ENCODE measurements at regions of chr3 and their contacts with region 1.

Region 1: GRCh38 chr3:11379233-11379823 is 107.1 kb downstream of the ATG7 start:
- DNase-seq: peak; percentile 73

Region 2: DNA sequence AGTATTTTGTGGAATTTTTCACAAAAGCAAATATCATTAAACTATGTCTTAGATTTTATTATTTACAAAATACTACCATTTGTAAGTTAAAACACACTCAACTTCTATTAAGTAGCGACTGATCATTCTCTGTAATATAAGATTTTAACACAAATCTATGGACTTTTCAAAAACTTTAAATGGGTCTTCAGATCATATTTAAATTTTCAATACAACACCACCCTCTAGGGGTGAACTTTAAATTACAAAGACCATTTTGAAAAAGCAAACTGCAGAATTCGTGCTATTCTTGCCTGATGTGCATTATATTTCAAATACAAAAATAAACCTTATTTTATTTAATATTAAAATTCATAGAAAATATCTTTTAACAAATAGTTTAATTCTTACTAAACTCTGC is 272.6 kb after region 1 on chr3:
- in situ Hi-C with region 1: loop called (anchors 25 kb)
- DNase-seq: peak; percentile 59

Region 3: GRCh38 chr3:11803977-11804892 is 424.9 kb after region 1 on chr3:
- in situ Hi-C with region 1: loop called (anchors 25 kb)
- DNase-seq: peak; percentile 65